B cell (primary cell): ENCODE measurements at regions of chr13 and their contacts with region 1.

Region 1: DNA sequence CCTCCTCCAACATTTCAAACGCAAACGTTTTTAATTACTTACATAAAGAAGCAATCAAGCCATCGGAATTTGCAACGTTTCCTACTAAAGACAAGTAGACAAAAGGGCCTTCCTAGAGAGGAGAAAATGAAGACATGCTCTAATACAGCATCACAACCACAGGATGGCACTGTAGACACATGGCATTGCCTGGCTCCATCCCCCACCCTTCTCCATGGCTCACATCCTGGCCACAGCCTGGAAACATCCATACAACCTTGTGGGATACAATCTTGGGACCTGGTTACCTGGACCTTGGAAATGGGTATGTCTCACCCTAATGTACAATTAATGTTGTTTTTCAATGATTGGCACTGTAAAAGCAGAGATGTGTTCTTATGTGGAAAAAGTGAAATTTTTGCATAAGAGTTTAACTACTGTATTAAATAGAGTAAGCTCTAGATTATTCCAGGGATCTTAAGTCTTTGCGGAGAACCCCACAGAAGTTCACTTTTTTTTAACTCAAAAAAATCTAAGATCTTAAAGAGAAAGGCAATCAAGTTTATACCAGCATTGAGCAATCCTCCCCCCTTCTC is 21.5 kb downstream of the EBPL start:
- DNase-seq: peak; percentile 25
- ATAC-seq: peak; percentile 47
- H3K4me3 ChIP-seq: no peak overlapping the region
- H3K4me3 Mint-ChIP-seq: no peak overlapping the region
- H3K27ac ChIP-seq: no peak overlapping the region
- H3K27ac Mint-ChIP-seq: no peak overlapping the region
- H3K4me1 ChIP-seq: no peaks in the 10 kb centered on the region
- H3K4me1 Mint-ChIP-seq: no peaks in the 10 kb centered on the region
- H3K27me3 ChIP-seq: no peaks in the 10 kb centered on the region
- H3K27me3 Mint-ChIP-seq: no peaks in the 10 kb centered on the region
- CTCF ChIP-seq: peak; percentile 30

Region 2: DNA sequence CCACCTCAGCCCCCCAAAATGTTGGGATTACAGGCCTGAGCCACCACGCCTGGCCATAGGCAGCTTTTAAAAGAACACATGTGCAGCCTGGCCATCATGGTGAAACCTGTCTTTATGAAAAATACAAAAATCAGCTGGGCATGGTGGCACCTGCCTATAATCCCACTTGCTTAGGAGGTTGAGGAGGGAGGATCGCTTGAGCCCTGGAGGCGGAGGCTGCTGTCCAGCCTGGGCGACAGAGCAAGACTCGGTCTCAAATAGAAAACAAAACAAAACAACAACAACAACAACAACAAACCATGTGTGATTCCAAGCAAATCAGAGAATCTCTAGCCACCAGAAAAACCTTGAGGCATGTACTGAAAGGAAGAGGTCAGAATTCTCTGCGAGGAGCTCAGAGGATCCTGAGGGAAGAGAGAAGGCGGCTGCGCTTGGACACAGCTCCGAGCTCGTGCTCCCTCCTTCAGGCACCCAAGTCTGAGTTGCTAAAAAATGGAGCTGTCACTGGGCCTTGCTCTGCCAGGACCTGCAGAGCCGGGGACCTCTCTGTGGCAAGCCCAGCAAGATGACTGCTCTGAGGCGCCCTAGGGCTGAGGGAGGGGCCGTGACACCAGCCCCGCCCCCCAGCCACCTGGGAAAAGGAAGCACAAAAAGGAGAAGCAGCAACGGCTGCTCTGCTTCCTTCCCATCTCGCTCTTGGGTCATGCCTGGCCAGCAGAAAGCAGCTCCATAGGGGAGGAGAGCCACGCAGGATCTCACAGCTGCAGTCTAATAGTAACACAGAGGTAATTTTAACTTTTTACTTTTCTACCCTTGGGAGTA is 41.8 kb before region 1 on chr13 and contains the start of gene ARL11:
- CTCF ChIA-PET with region 1: no interaction called
- POLR2A ChIA-PET with region 1: no interaction called
- intact Hi-C with region 1: no loop called
- DNase-seq: peak; percentile 88
- ATAC-seq: peak; percentile 99
- H3K4me3 ChIP-seq: peak within 1 kb of the TSS; percentile 79 to 100 (median 90)
- H3K4me3 Mint-ChIP-seq: peak within 1 kb of the TSS; percentile 99
- H3K27ac ChIP-seq: peak within 1 kb of the TSS; percentile 61 to 78
- H3K27ac Mint-ChIP-seq: peak within 1 kb of the TSS; percentile 94
- H3K4me1 ChIP-seq: peaks cover 17 to 21% of the 10 kb centered on the region in 2 donors
- H3K4me1 Mint-ChIP-seq: peaks cover 44% of the 10 kb centered on the region
- H3K27me3 ChIP-seq: no peaks in the 10 kb centered on the region
- H3K27me3 Mint-ChIP-seq: no peaks in the 10 kb centered on the region
- CTCF ChIP-seq: no peak
- total RNA-seq, gene ARL11: 17.9 and 21.4 TPM in 2 replicates

Region 3: DNA sequence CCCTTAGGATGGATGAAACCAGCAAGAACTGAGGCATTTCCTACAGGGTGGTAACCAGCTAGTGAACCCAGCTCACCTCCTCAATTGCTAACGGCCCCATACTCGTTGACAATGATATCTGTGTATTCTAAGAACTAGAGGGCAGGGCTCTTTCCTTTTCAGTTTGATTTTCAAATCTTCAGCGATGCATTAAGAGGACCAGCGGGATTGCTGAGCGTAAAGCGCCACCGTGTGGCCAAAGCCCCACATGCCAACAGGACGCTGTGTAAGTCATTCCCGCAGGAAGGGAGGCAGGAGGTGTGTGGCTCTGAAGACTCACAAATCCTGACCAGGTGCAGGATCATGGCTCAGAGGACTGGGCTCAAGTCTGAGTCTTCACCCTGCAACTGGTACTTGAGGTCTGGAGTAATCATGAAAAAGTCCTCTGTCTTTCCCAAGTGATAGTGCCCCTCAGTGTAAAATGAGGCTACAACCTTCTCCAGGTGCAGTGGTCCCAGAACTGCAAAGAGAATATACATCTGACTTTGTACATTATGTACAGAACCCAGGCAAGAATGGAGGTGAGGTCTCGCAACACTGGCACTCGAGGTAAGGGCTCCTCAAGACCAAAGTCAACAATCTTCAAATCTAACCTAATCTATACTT is 1400.3 kb after region 1 on chr13:
- CTCF ChIA-PET with region 1: interaction called, 5 read pairs
- POLR2A ChIA-PET with region 1: no interaction called
- intact Hi-C with region 1: loop called (anchors 5 kb)
- DNase-seq: peak; percentile 83
- ATAC-seq: peak; percentile 91
- H3K4me3 ChIP-seq: no peak overlapping the region
- H3K4me3 Mint-ChIP-seq: no peak overlapping the region
- H3K27ac ChIP-seq: no peak overlapping the region
- H3K27ac Mint-ChIP-seq: no peak overlapping the region
- H3K4me1 ChIP-seq: peaks cover 11 to 19% of the 10 kb centered on the region in 2 donors
- H3K4me1 Mint-ChIP-seq: peaks cover 12% of the 10 kb centered on the region
- H3K27me3 ChIP-seq: peaks cover 0 to 20% (median 10%) of the 10 kb centered on the region in 4 experiments
- H3K27me3 Mint-ChIP-seq: peaks cover 30% of the 10 kb centered on the region
- CTCF ChIP-seq: peak; percentile 97